ENCODE measurements at regions of chr2 and their contacts with region 1.

Region 1: DNA sequence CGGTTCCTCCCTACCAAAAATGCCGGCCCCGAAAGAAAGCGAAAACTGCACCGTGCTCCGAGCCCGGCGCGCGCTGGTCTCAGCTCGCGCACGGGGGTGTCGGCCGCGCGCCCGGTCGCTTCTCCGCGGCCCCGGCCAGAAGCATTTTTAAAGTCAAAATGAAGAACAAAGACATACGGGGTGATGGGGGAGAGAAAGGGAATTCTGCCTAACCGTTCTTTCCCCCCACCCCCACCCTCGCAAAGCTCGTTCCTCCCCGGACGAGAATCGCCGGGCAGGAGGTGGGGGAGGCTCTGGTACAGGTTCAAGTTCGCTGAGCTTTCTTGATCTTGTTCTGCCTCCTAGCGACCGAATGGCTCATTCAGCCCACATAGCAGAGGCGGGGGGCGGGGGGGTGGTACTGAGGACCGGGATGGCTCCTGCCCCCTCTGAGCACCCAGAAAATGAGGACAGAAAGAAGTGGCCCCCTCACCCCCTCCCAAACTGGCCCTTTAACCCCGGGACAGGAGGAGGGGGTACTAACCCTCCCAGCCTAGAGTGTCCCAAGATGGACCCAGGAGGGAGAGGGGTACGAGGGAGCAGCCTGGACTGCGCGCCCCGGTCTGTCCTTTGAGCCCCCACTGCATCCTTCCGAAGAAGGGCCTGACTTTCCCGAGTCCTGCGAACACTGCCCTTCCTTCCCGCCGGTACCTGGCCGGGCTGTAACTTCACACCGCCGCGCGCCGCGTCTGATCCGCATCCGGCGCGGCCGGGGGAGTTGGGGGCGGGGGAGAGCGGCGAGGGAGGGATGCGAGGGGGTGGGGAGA is 3.1 kb downstream of the BCL11A start:
- DNase-seq: peak; percentile 59 to 67
- H3K4me3 ChIP-seq: peak overlapping the region; percentile 65
- H3K4me3 Mint-ChIP-seq: peak overlapping the region; percentile 79
- H3K27ac Mint-ChIP-seq: no peak overlapping the region
- H3K4me1 ChIP-seq: peaks cover 14% of the 10 kb centered on the region
- H3K4me1 Mint-ChIP-seq: peaks cover 8% of the 10 kb centered on the region
- H3K27me3 ChIP-seq: no peaks in the 10 kb centered on the region
- H3K27me3 Mint-ChIP-seq: peaks cover 27% of the 10 kb centered on the region
- CTCF ChIP-seq: peak; percentile 57 to 76

Region 2: GRCh38 chr2:60167089-60167488 is 383.3 kb before region 1 on chr2:
- CTCF ChIA-PET with region 1: no interaction called
- POLR2A ChIA-PET with region 1: no interaction called
- intact Hi-C with region 1: loop called (anchors 10 kb)
- DNase-seq: no peak
- H3K4me3 ChIP-seq: no peak overlapping the region
- H3K4me3 Mint-ChIP-seq: no peak overlapping the region
- H3K27ac Mint-ChIP-seq: no peak overlapping the region
- H3K4me1 ChIP-seq: no peaks in the 10 kb centered on the region
- H3K4me1 Mint-ChIP-seq: no peaks in the 10 kb centered on the region
- H3K27me3 ChIP-seq: no peaks in the 10 kb centered on the region; the same call in 1 of the 2 replicates
- H3K27me3 Mint-ChIP-seq: no peaks in the 10 kb centered on the region
- CTCF ChIP-seq: no peak

Region 3: DNA sequence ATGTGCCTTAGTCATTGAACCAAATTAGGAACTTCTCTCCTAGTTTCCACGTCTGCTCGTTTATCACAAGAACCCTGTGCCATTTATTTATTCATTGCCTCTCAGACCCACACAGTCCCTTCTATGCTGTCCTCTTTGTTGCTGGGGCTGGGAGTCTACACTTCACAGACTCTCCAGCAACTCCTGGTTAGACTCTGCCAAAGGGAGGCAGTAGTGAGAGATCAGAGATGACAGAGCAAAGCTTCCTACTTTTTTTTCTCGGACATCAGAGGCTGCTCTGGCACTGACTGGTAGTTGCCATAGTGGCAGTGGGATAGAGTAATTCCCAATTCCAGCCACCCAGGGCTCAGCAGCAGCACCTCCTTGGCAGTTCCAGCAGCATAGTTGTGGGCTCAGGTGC is 274.4 kb before region 1 on chr2:
- CTCF ChIA-PET with region 1: no interaction called
- POLR2A ChIA-PET with region 1: interaction called, 11 read pairs
- intact Hi-C with region 1: no loop called
- DNase-seq: no peak
- H3K4me3 ChIP-seq: no peak overlapping the region
- H3K4me3 Mint-ChIP-seq: no peak overlapping the region
- H3K27ac Mint-ChIP-seq: no peak overlapping the region
- H3K4me1 ChIP-seq: no peaks in the 10 kb centered on the region
- H3K4me1 Mint-ChIP-seq: no peaks in the 10 kb centered on the region
- H3K27me3 ChIP-seq: no peaks in the 10 kb centered on the region
- H3K27me3 Mint-ChIP-seq: peaks cover 4% of the 10 kb centered on the region
- CTCF ChIP-seq: no peak

Region 4: GRCh38 chr2:60337140-60337494 is 213.3 kb before region 1 on chr2:
- CTCF ChIA-PET with region 1: interaction called, 4 read pairs
- POLR2A ChIA-PET with region 1: no interaction called
- intact Hi-C with region 1: loop called (anchors 2 kb)
- DNase-seq: peak in 1 of 2 experiments; percentile 25
- H3K4me3 ChIP-seq: no peak overlapping the region
- H3K4me3 Mint-ChIP-seq: no peak overlapping the region
- H3K27ac Mint-ChIP-seq: no peak overlapping the region
- H3K4me1 ChIP-seq: no peaks in the 10 kb centered on the region
- H3K4me1 Mint-ChIP-seq: peaks cover 7% of the 10 kb centered on the region
- H3K27me3 ChIP-seq: no peaks in the 10 kb centered on the region
- H3K27me3 Mint-ChIP-seq: no peaks in the 10 kb centered on the region
- CTCF ChIP-seq: peak in 1 of 2 experiments; percentile 32

Region 5: GRCh38 chr2:60439219-60439974 is 111.0 kb before region 1 on chr2:
- CTCF ChIA-PET with region 1: interaction called, 10 read pairs
- POLR2A ChIA-PET with region 1: no interaction called
- intact Hi-C with region 1: loop called (anchors 5 kb)
- DNase-seq: peak in 1 of 2 experiments; percentile 29
- H3K4me3 ChIP-seq: no peak overlapping the region
- H3K4me3 Mint-ChIP-seq: no peak overlapping the region
- H3K27ac Mint-ChIP-seq: no peak overlapping the region
- H3K4me1 ChIP-seq: peaks cover 8% of the 10 kb centered on the region
- H3K4me1 Mint-ChIP-seq: peaks cover 18% of the 10 kb centered on the region
- H3K27me3 ChIP-seq: no peaks in the 10 kb centered on the region
- H3K27me3 Mint-ChIP-seq: no peaks in the 10 kb centered on the region
- CTCF ChIP-seq: peak; percentile 38 to 71

Region 6: GRCh38 chr2:60597346-60597745 is 47.0 kb after region 1 on chr2:
- CTCF ChIA-PET with region 1: no interaction called
- POLR2A ChIA-PET with region 1: no interaction called
- intact Hi-C with region 1: no loop called
- DNase-seq: no peak
- H3K4me3 ChIP-seq: no peak overlapping the region
- H3K4me3 Mint-ChIP-seq: no peak overlapping the region
- H3K27ac Mint-ChIP-seq: no peak overlapping the region
- H3K4me1 ChIP-seq: no peaks in the 10 kb centered on the region
- H3K4me1 Mint-ChIP-seq: no peaks in the 10 kb centered on the region
- H3K27me3 ChIP-seq: no peaks in the 10 kb centered on the region
- H3K27me3 Mint-ChIP-seq: peaks cover 14% of the 10 kb centered on the region
- CTCF ChIP-seq: no peak

Measured in Caco-2 (cell line).